Activated CD8-positive, alpha-beta T cell treated with anti-CD3 and anti-CD28 coated beads, Interleukin-2, amount 10 ng/mL, durations not matched to agents 7 days and 5 days (primary cell): ENCODE measurements at regions of chr5 and their contacts with region 1.

Region 1: GRCh38 chr5:131589510-131590348 is 45.3 kb downstream of the RAPGEF6 start:
- DNase-seq: peak; percentile 49
- ATAC-seq: peak; percentile 67
- H3K4me3 Mint-ChIP-seq: no peak overlapping the region
- H3K27ac Mint-ChIP-seq: no peak overlapping the region
- H3K4me1 Mint-ChIP-seq: peaks cover 33% of the 10 kb centered on the region
- H3K27me3 Mint-ChIP-seq: no peaks in the 10 kb centered on the region

Region 2: DNA sequence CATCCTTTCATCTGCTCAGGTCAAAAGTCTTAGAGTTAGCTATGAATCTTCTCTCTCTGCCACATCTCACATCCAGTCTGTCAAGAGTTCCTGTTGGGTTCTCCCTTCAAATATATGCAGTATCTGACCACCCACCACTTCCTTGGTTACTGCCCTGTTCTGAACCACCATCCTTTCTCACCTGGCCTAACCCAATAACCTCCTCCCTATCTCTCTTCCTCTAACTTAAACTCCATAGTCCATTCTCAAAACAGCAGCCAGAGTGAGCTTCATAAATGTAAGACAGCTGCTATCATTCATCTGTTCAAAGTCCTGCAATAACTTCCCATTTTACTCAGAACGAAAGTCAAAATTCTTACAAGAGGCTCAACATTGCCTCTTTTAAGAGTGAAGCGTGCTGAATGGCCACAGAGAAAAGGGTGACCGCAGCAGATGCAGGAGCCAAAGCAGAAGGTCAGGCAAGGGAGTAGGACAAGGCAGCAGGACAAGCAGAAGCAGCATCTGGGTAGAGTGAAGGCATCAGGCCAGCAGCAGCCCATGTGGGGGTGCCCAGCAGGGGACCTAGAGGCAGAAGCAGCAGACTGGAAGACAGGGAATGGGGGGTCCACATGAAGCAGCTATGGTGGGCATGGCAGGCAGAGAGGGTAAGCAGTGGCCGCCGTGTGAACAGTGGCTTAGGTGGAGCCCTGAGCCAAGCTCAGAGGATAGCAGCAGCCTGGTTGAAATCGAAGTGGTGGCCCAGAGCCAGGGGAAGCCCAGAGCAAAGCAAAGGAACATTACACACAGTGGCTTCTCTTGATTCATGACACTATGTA is 365.1 kb before region 1 on chr5:
- CTCF ChIA-PET with region 1: no interaction called
- POLR2A ChIA-PET with region 1: no interaction called
- DNase-seq: peak; percentile 60
- ATAC-seq: peak; percentile 83
- H3K4me3 Mint-ChIP-seq: no peak overlapping the region
- H3K27ac Mint-ChIP-seq: no peak overlapping the region
- H3K4me1 Mint-ChIP-seq: peaks cover 14% of the 10 kb centered on the region
- H3K27me3 Mint-ChIP-seq: no peaks in the 10 kb centered on the region

Region 3: GRCh38 chr5:131423056-131423455 is 166.7 kb before region 1 on chr5:
- CTCF ChIA-PET with region 1: interaction called, 16 read pairs
- POLR2A ChIA-PET with region 1: no interaction called
- DNase-seq: no peak
- ATAC-seq: no peak
- H3K4me3 Mint-ChIP-seq: no peak overlapping the region
- H3K27ac Mint-ChIP-seq: no peak overlapping the region
- H3K4me1 Mint-ChIP-seq: peaks cover 5% of the 10 kb centered on the region
- H3K27me3 Mint-ChIP-seq: no peaks in the 10 kb centered on the region

Region 4: DNA sequence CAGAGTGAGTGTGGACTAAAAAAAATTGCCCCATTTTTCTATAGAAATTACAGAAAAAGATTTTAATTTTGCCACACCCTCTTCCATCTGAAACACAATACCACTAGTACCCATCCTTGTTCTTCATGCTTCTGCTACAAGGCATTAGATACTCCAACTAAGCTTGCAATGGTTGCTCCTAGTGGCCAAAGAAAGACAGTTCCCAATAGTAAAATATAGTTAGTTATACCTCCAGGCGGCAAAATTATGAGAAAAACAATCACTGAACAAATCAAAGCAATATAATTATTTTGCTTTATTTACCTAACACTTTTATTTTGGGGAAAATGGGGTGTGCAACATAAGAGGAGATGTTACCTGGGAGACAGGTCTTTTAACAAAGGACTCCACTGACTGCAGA is 55.9 kb before region 1 on chr5:
- CTCF ChIA-PET with region 1: interaction called, 28 read pairs
- POLR2A ChIA-PET with region 1: interaction called, 3 read pairs
- DNase-seq: no peak
- ATAC-seq: no peak
- H3K4me3 Mint-ChIP-seq: no peak overlapping the region
- H3K27ac Mint-ChIP-seq: no peak overlapping the region
- H3K4me1 Mint-ChIP-seq: peaks cover 73% of the 10 kb centered on the region
- H3K27me3 Mint-ChIP-seq: no peaks in the 10 kb centered on the region

Region 5: GRCh38 chr5:131634996-131635754 is 45.4 kb after region 1 on chr5 and contains the start of gene RAPGEF6:
- CTCF ChIA-PET with region 1: interaction called, 46 read pairs
- POLR2A ChIA-PET with region 1: no interaction called
- DNase-seq: peak; percentile 99
- ATAC-seq: peak; percentile 91
- H3K4me3 Mint-ChIP-seq: peak within 1 kb of the TSS; percentile 87
- H3K27ac Mint-ChIP-seq: peak within 1 kb of the TSS; percentile 98
- H3K4me1 Mint-ChIP-seq: peaks cover 28% of the 10 kb centered on the region
- H3K27me3 Mint-ChIP-seq: no peaks in the 10 kb centered on the region
- total RNA-seq, gene RAPGEF6: 36.4 to 40.9 TPM

Region 6: GRCh38 chr5:131661931-131662330 is 72.2 kb after region 1 on chr5:
- CTCF ChIA-PET with region 1: no interaction called
- POLR2A ChIA-PET with region 1: no interaction called
- DNase-seq: no peak
- ATAC-seq: no peak
- H3K4me3 Mint-ChIP-seq: no peak overlapping the region
- H3K27ac Mint-ChIP-seq: no peak overlapping the region
- H3K4me1 Mint-ChIP-seq: peaks cover 4% of the 10 kb centered on the region
- H3K27me3 Mint-ChIP-seq: no peaks in the 10 kb centered on the region

Region 7: GRCh38 chr5:131796793-131797693 is 207.3 kb after region 1 on chr5 and contains the start of gene FNIP1:
- CTCF ChIA-PET with region 1: interaction called, 15 read pairs
- POLR2A ChIA-PET with region 1: interaction called, 4 read pairs
- DNase-seq: peak; percentile 99
- ATAC-seq: peak; percentile 96
- H3K4me3 Mint-ChIP-seq: peak within 1 kb of the TSS; percentile 91
- H3K27ac Mint-ChIP-seq: peak within 1 kb of the TSS; percentile 90
- H3K4me1 Mint-ChIP-seq: peaks cover 31% of the 10 kb centered on the region
- H3K27me3 Mint-ChIP-seq: peaks cover 8% of the 10 kb centered on the region
- total RNA-seq, gene FNIP1: 25.5 to 26.7 TPM

Region 8: GRCh38 chr5:132064738-132065331 is 475.1 kb after region 1 on chr5:
- CTCF ChIA-PET with region 1: interaction called, 37 read pairs
- POLR2A ChIA-PET with region 1: no interaction called
- DNase-seq: peak; percentile 90
- ATAC-seq: peak; percentile 73
- H3K4me3 Mint-ChIP-seq: no peak overlapping the region
- H3K27ac Mint-ChIP-seq: peak overlapping the region; percentile 57
- H3K4me1 Mint-ChIP-seq: peaks cover 56% of the 10 kb centered on the region
- H3K27me3 Mint-ChIP-seq: no peaks in the 10 kb centered on the region